PC-9 (cell line): ENCODE measurements at regions of chr12 and their contacts with region 1.

Region 1: DNA sequence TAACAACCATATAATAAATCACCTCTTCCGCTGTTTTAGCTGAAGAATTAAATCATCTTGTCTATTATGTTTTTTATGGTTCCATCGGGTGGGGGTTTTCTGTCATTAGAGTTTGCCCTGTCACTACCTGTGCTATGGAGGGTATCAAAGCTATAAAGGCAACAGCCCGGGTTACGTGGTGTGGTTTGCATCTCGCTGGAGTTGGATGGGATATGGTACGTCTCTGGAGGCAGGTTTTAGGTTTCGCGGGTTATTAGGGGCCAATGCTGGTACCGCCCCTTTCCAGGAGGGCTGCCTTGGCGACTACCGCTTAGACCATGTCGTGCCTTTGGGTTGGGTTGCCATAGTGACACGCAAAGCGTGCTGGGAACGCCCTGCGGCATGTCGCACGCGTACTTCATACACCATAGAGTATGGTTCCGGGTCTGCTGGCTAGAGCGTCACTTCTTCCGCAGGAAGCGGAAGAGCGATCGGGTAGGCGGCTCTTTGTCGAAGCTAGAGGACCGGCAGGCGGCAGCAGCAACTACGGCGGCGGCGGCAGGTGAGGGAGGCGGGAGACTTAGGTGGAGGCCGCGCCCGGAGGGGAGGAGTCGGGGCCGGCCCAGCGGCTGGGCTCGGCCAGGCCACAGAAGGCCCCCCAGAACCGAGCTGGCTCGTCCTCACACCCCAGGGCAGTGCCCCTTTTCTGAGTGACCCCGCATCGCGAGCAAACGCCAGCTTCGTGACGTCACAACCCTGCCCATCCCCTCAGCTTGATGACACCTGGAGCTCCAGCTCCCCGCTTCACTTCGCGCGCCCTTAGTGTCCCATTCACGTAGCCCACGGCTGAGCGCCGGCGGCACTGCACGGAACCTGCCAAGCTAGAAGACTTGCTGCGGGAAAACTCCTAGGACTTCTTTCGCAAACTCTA is at the start of gene ZC3H10:
- DNase-seq: peak; percentile 99
- H3K4me3 ChIP-seq: peak within 1 kb of the TSS; percentile 98
- H3K27ac ChIP-seq: peak within 1 kb of the TSS; percentile 96
- H3K4me1 ChIP-seq: peaks cover 26% of the 10 kb centered on the region
- H3K27me3 ChIP-seq: no peaks in the 10 kb centered on the region
- CTCF ChIP-seq: peak; percentile 29; the same call in 1 of the 2 replicates
- total RNA-seq, gene ZC3H10: 4.4 and 6.5 TPM in 2 replicates

Region 2: GRCh38 chr12:56020423-56021184 is 97.4 kb before region 1 on chr12 and contains the start of gene IKZF4:
- CTCF ChIA-PET with region 1: no interaction called
- POLR2A ChIA-PET with region 1: no interaction called
- intact Hi-C with region 1: no loop called
- DNase-seq: no peak
- H3K4me3 ChIP-seq: no peak within 1 kb of the TSS
- H3K27ac ChIP-seq: no peak within 1 kb of the TSS
- H3K4me1 ChIP-seq: no peaks in the 10 kb centered on the region
- H3K27me3 ChIP-seq: no peaks in the 10 kb centered on the region
- CTCF ChIP-seq: no peak
- total RNA-seq, gene IKZF4: 7.4 and 9.6 TPM in 2 replicates

Region 3: GRCh38 chr12:56041552-56042429 is 76.2 kb before region 1 on chr12 and contains the start of gene RPS26:
- CTCF ChIA-PET with region 1: interaction called, 4 read pairs
- POLR2A ChIA-PET with region 1: interaction called, 3 read pairs
- intact Hi-C with region 1: loop called (anchors 2 kb)
- DNase-seq: peak; percentile 95 to 96
- H3K4me3 ChIP-seq: peak within 1 kb of the TSS; percentile 73
- H3K27ac ChIP-seq: peak within 1 kb of the TSS; percentile 68
- H3K4me1 ChIP-seq: peaks cover 24% of the 10 kb centered on the region
- H3K27me3 ChIP-seq: no peaks in the 10 kb centered on the region
- CTCF ChIP-seq: peak; percentile 51
- total RNA-seq, gene RPS26: 25.2 and 43.3 TPM in 2 replicates

Region 4: GRCh38 chr12:56158029-56158925 is 40.2 kb after region 1 on chr12 and contains the start of gene MYL6:
- CTCF ChIA-PET with region 1: interaction called, 5 read pairs
- POLR2A ChIA-PET with region 1: no interaction called
- intact Hi-C with region 1: loop called (anchors 5 kb)
- DNase-seq: peak; percentile 89 to 93
- H3K4me3 ChIP-seq: peak within 1 kb of the TSS; percentile 95
- H3K27ac ChIP-seq: peak within 1 kb of the TSS; percentile 82
- H3K4me1 ChIP-seq: peaks cover 26% of the 10 kb centered on the region
- H3K27me3 ChIP-seq: no peaks in the 10 kb centered on the region
- CTCF ChIP-seq: no peak
- total RNA-seq, gene MYL6: 666 and 697 TPM in 2 replicates

Region 5: GRCh38 chr12:56266693-56267442 is 148.8 kb after region 1 on chr12 and contains the start of gene COQ10A:
- CTCF ChIA-PET with region 1: no interaction called
- POLR2A ChIA-PET with region 1: interaction called, 7 read pairs
- intact Hi-C with region 1: loop called (anchors 2 kb)
- DNase-seq: peak; percentile 57 to 85
- H3K4me3 ChIP-seq: peak within 1 kb of the TSS; percentile 75
- H3K27ac ChIP-seq: no peak within 1 kb of the TSS
- H3K4me1 ChIP-seq: peaks cover 15% of the 10 kb centered on the region
- H3K27me3 ChIP-seq: no peaks in the 10 kb centered on the region
- CTCF ChIP-seq: peak; percentile 73
- total RNA-seq, gene COQ10A: 6.5 and 6.9 TPM in 2 replicates

Region 6: GRCh38 chr12:56468216-56469006 is 350.4 kb after region 1 on chr12 and contains the start of gene SPRYD4:
- CTCF ChIA-PET with region 1: no interaction called
- POLR2A ChIA-PET with region 1: no interaction called
- intact Hi-C with region 1: loop called (anchors 1 kb)
- DNase-seq: peak; percentile 79 to 88
- H3K4me3 ChIP-seq: peak within 1 kb of the TSS; percentile 99
- H3K27ac ChIP-seq: peak within 1 kb of the TSS; percentile 74
- H3K4me1 ChIP-seq: peaks cover 7% of the 10 kb centered on the region; the same call in 1 of the 2 replicates
- H3K27me3 ChIP-seq: no peaks in the 10 kb centered on the region
- CTCF ChIP-seq: peak; percentile 41; the same call in 1 of the 2 replicates
- total RNA-seq, gene SPRYD4: 3.2 and 3.3 TPM in 2 replicates

Region 7: GRCh38 chr12:56636675-56637540 is 518.9 kb after region 1 on chr12:
- CTCF ChIA-PET with region 1: interaction called, 3 read pairs
- POLR2A ChIA-PET with region 1: no interaction called
- intact Hi-C with region 1: loop called (anchors 2 kb)
- DNase-seq: peak; percentile 98 to 99
- H3K4me3 ChIP-seq: peak overlapping the region; percentile 91
- H3K27ac ChIP-seq: peak overlapping the region; percentile 58
- H3K4me1 ChIP-seq: peaks cover 25% of the 10 kb centered on the region
- H3K27me3 ChIP-seq: no peaks in the 10 kb centered on the region
- CTCF ChIP-seq: peak; percentile 71